ENCODE measurements at regions of chr4 and their contacts with region 1.

Region 1: DNA sequence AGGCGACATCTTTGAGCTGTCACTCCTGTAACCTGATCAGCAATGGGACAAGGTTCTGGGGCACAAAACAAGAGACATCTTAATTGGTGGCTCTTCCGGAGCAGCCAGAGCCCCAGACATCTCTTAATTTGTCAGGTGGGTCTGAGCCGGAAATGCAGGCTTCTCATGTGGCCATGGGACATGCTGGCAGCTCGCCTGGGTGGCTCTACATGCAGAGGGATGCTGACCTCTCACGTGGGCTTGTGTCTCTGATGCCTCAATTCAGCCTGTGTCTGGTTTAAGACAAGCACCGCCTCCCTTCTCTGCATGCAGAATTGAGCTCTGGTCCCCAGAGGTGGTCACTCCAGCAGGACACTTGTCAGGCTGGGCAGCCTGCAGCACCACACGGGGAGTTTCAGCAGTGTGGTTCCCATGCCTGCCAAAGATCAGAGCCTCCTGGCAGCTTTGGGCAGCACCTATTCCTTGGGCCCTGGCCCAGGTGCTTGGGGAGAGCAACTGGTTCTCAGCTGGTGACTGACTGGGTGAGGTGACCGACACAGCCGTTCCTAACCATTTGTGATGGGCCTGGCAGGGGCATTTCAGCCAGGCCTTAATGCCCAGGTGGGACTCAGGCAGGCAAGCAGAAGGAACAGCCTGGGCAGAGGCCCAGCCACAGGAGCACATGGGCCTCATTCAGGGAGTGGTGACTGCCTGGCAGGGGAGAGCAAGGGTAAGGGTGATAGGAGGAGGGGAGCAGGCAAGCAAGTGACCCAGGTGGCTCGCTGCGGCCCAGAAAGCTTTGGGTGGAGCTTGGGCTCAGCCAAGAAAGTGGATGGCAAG is 53.4 kb downstream of the HMX1 start:
- DNase-seq: no peak
- ATAC-seq: no peak
- H3K4me3 ChIP-seq: no peak overlapping the region
- H3K27ac ChIP-seq: no peak overlapping the region
- H3K4me1 ChIP-seq: peaks cover 0 to 6% of the 10 kb centered on the region in 2 experiments; a peak in 1 of 5 replicates
- H3K27me3 ChIP-seq: peaks cover 0 to 9% of the 10 kb centered on the region in 2 experiments; a peak in 1 of 5 replicates
- CTCF ChIP-seq: no peak
- EP300 ChIP-seq: no peak
- POLR2A ChIP-seq: no peak
- RAD21 ChIP-seq: no peak

Region 2: GRCh38 chr4:8795774-8796495 is 22.3 kb before region 1 on chr4:
- CTCF ChIA-PET with region 1: no interaction called
- POLR2A ChIA-PET with region 1: interaction called, 24 read pairs
- in situ Hi-C with region 1: no loop called
- intact Hi-C with region 1: no loop called
- DNase-seq: no peak
- ATAC-seq: no peak
- H3K4me3 ChIP-seq: no peak overlapping the region
- H3K27ac ChIP-seq: no peak overlapping the region
- H3K4me1 ChIP-seq: no peaks in the 10 kb centered on the region
- H3K27me3 ChIP-seq: peaks cover 0 to 8% of the 10 kb centered on the region in 2 experiments; a peak in 1 of 5 replicates
- CTCF ChIP-seq: no peak
- EP300 ChIP-seq: no peak
- POLR2A ChIP-seq: no peak
- RAD21 ChIP-seq: no peak

Region 3: GRCh38 chr4:8911316-8912088 is 93.2 kb after region 1 on chr4:
- CTCF ChIA-PET with region 1: no interaction called
- POLR2A ChIA-PET with region 1: no interaction called
- in situ Hi-C with region 1: no loop called
- intact Hi-C with region 1: no loop called
- DNase-seq: no peak
- ATAC-seq: no peak
- H3K4me3 ChIP-seq: no peak overlapping the region
- H3K27ac ChIP-seq: no peak overlapping the region
- H3K4me1 ChIP-seq: no peaks in the 10 kb centered on the region; a peak in 1 of 5 replicates
- H3K27me3 ChIP-seq: peaks cover 20 to 60% of the 10 kb centered on the region in 2 experiments; a peak in 4 of 5 replicates
- CTCF ChIP-seq: no peak
- EP300 ChIP-seq: no peak
- POLR2A ChIP-seq: no peak
- RAD21 ChIP-seq: no peak

Measured in K562 (cell line).